Naive thymus-derived CD4-positive, alpha-beta T cell (primary cell): ENCODE measurements at regions of chrX and their contacts with region 1.

Region 1: GRCh38 chrX:78103623-78104446 is at the start of gene PGK1:
- DNase-seq: peak; percentile 76 to 96 (median 93)
- ATAC-seq: peak; percentile 97
- H3K4me3 ChIP-seq: peak within 1 kb of the TSS; percentile 98
- H3K4me3 Mint-ChIP-seq: peak within 1 kb of the TSS; percentile 89 to 99 (median 92)
- H3K27ac ChIP-seq: peak within 1 kb of the TSS; percentile 97
- H3K27ac Mint-ChIP-seq: peak within 1 kb of the TSS; percentile 90 to 97 (median 94)
- H3K4me1 ChIP-seq: peaks cover 21 to 27% of the 10 kb centered on the region in 2 donors
- H3K4me1 Mint-ChIP-seq: peaks cover 15 to 57% (median 48%) of the 10 kb centered on the region in 7 donors
- H3K27me3 ChIP-seq: no peaks in the 10 kb centered on the region
- H3K27me3 Mint-ChIP-seq: no peaks in the 10 kb centered on the region
- total RNA-seq, gene PGK1: 180 to 1,293 (median 217) TPM

Region 2: GRCh38 chrX:77785486-77786364 is 318.1 kb before region 1 on chrX and contains the start of gene ATRX:
- CTCF ChIA-PET with region 1: interaction called, 3 read pairs
- POLR2A ChIA-PET with region 1: no interaction called
- intact Hi-C with region 1: loop called (anchors 1 kb)
- DNase-seq: peak; percentile 55 to 83 (median 79)
- ATAC-seq: peak; percentile 94
- H3K4me3 ChIP-seq: peak within 1 kb of the TSS; percentile 86
- H3K4me3 Mint-ChIP-seq: peak within 1 kb of the TSS; percentile 98 to 100 (median 100)
- H3K27ac ChIP-seq: peak within 1 kb of the TSS; percentile 93
- H3K27ac Mint-ChIP-seq: peak within 1 kb of the TSS; percentile 99 to 100 (median 100)
- H3K4me1 ChIP-seq: peaks cover 7 to 8% of the 10 kb centered on the region in 2 donors
- H3K4me1 Mint-ChIP-seq: peaks cover 0 to 46% (median 32%) of the 10 kb centered on the region in 7 donors
- H3K27me3 ChIP-seq: no peaks in the 10 kb centered on the region
- H3K27me3 Mint-ChIP-seq: no peaks in the 10 kb centered on the region
- total RNA-seq, gene ATRX: 90.1 to 126 (median 114) TPM

Region 3: GRCh38 chrX:78066110-78066509 is 37.7 kb before region 1 on chrX:
- CTCF ChIA-PET with region 1: no interaction called
- POLR2A ChIA-PET with region 1: no interaction called
- intact Hi-C with region 1: loop called in 1 of 2 experiments (anchors 5 kb)
- DNase-seq: no peak
- ATAC-seq: no peak
- H3K4me3 ChIP-seq: no peak overlapping the region
- H3K4me3 Mint-ChIP-seq: no peak overlapping the region
- H3K27ac ChIP-seq: no peak overlapping the region
- H3K27ac Mint-ChIP-seq: no peak overlapping the region
- H3K4me1 ChIP-seq: no peaks in the 10 kb centered on the region
- H3K4me1 Mint-ChIP-seq: peaks cover 0 to 17% (median 0%) of the 10 kb centered on the region in 7 donors
- H3K27me3 ChIP-seq: no peaks in the 10 kb centered on the region
- H3K27me3 Mint-ChIP-seq: no peaks in the 10 kb centered on the region

Region 4: DNA sequence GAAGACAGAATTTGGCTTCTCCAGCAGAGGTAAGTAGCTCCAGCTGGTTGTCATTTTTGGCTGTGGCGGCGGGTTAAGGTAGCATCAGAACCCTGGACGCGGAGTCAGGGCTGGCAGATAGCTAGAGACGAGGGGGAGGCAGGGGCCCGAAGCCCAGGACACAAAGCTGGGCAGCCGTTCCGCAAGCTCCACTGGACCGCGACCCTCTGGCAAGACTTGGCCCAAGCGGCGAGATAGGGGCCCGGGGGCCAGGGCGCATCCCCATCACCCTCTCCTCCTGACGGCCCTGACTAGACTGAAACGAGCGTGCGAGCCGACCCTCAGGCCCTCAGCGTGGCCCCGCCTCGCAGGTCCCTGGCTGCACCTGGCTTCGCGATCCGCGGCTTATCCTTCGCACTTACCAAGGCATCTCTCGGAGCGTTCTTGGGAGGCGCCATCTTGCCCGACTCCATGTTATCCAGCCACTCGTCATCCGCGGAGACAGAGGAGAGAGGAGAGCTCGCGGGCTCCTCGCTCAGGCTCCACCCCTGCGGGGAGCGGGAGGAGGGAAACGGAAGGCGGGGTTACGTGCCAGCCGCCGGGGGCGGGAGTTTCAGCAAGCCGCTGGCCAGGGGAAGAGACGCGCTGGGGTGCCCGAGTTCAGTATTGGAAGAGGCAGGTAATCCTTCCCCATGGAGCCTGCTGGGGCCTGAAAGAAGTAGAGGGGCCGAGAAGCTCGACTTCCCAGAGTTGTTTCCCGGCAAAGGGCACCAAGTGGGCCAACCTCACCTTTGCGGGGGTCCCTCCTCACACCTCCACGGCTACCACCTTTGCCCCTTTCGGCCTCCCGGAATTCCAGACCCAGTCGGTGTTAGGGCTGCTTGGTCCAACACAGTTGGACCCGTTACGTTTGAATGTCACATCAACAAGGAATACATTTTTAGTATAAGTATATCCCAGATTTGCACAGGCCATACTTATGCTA is 35.6 kb after region 1 on chrX and contains the start of gene TAF9B:
- CTCF ChIA-PET with region 1: no interaction called
- POLR2A ChIA-PET with region 1: interaction called, 4 read pairs
- intact Hi-C with region 1: loop called (anchors 1 to 2 kb)
- DNase-seq: peak; percentile 57 to 84 (median 80)
- ATAC-seq: peak; percentile 99
- H3K4me3 ChIP-seq: peak within 1 kb of the TSS; percentile 77
- H3K4me3 Mint-ChIP-seq: peak within 1 kb of the TSS; percentile 88 to 95 (median 92)
- H3K27ac ChIP-seq: peak within 1 kb of the TSS; percentile 82
- H3K27ac Mint-ChIP-seq: peak within 1 kb of the TSS; percentile 81 to 95 (median 93)
- H3K4me1 ChIP-seq: no peaks in the 10 kb centered on the region
- H3K4me1 Mint-ChIP-seq: peaks cover 0 to 11% (median 5%) of the 10 kb centered on the region in 7 donors
- H3K27me3 ChIP-seq: no peaks in the 10 kb centered on the region
- H3K27me3 Mint-ChIP-seq: no peaks in the 10 kb centered on the region
- total RNA-seq, gene TAF9B: 10.4 to 19.9 (median 18.9) TPM

Region 5: GRCh38 chrX:78333521-78333920 is 229.7 kb after region 1 on chrX:
- CTCF ChIA-PET with region 1: no interaction called
- POLR2A ChIA-PET with region 1: interaction called, 3 read pairs
- intact Hi-C with region 1: loop called in 1 of 2 experiments (anchors 2 kb)
- DNase-seq: peak in 7 of 9 donors; percentile 33 to 77 (median 55)
- ATAC-seq: peak; percentile 88
- H3K4me3 ChIP-seq: no peak overlapping the region
- H3K4me3 Mint-ChIP-seq: peak overlapping the region in 9 of 10 donors; percentile 3 to 70 (median 19)
- H3K27ac ChIP-seq: peak overlapping the region; percentile 75
- H3K27ac Mint-ChIP-seq: peak overlapping the region; percentile 60 to 99 (median 89)
- H3K4me1 ChIP-seq: peaks cover 9 to 38% of the 10 kb centered on the region in 2 donors
- H3K4me1 Mint-ChIP-seq: peaks cover 22 to 86% (median 67%) of the 10 kb centered on the region in 7 donors
- H3K27me3 ChIP-seq: no peaks in the 10 kb centered on the region
- H3K27me3 Mint-ChIP-seq: no peaks in the 10 kb centered on the region

Region 6: DNA sequence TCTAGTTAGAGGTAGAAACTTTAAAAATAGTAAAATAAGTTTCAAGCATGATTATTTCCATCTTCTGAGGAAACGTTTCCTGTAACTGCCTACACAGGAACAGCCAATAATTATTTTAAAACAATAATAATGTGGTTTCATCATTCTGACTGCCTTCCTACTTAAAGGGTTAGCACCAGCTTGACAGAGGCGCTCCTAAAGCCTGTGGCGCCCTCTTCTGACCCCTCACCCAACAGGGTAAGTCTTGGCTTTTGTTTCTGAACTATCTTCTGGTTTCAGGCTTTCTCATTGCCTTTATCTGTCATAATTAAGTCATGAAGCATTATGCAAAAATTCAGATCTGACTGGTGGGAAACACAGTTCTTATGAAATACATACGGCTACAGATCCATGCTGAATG is 1166.6 kb after region 1 on chrX:
- CTCF ChIA-PET with region 1: no interaction called
- POLR2A ChIA-PET with region 1: no interaction called
- intact Hi-C with region 1: loop called in 1 of 2 experiments (anchors 10 kb)
- DNase-seq: peak; percentile 29 to 76 (median 68)
- ATAC-seq: peak; percentile 98
- H3K4me3 ChIP-seq: no peak overlapping the region
- H3K4me3 Mint-ChIP-seq: peak overlapping the region; percentile 17 to 77 (median 56)
- H3K27ac ChIP-seq: peak overlapping the region; percentile 61
- H3K27ac Mint-ChIP-seq: peak overlapping the region in 8 of 9 donors; percentile 84 to 94 (median 90)
- H3K4me1 ChIP-seq: peaks cover 24 to 34% of the 10 kb centered on the region in 2 donors
- H3K4me1 Mint-ChIP-seq: peaks cover 13 to 68% (median 45%) of the 10 kb centered on the region in 7 donors
- H3K27me3 ChIP-seq: no peaks in the 10 kb centered on the region
- H3K27me3 Mint-ChIP-seq: no peaks in the 10 kb centered on the region